ENCODE measurements at regions of chr6 and their contacts with region 1.

Region 1: DNA sequence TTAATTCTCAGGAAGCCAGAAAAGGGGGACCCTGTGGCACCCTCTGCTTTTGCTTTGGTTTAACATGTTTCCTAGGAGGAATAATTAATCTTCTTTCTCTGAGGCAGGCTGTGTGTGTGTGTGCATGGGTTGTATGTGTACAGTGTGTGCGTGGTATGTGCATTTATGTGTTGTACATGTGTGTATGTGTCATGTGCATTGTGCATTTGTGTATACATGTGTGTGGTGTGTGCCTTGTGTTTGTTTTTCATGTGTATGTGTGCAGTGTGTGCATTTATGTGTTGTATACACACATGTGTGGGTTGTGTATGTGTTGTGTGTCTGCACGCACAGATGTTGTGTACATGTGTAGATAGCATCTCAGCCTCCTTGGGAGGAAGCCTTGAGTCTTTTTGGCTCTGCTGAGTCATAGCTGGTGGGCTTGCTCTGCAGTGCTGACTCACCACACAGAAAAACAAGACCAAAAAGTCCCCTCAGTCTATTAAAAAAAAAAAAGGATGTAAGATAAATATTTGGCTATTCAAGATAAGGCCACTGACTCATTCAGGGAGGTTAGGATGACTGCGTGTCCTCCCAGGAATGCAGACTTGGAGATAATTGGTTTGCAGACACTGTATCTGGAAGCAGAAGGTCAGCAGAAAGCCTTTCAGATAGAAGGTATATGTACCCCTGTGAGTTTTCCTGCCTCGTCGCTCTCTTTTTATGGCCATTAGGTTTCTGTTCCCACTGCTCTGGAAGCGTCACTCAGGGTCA is 58.6 kb downstream of the SYNJ2 start:
- DNase-seq: peak; percentile 91
- H3K4me3 ChIP-seq: no peak overlapping the region
- H3K27ac ChIP-seq: no peak overlapping the region
- H3K4me1 ChIP-seq: peaks cover 48% of the 10 kb centered on the region
- H3K27me3 ChIP-seq: no peaks in the 10 kb centered on the region
- CTCF ChIP-seq: no peak

Region 2: DNA sequence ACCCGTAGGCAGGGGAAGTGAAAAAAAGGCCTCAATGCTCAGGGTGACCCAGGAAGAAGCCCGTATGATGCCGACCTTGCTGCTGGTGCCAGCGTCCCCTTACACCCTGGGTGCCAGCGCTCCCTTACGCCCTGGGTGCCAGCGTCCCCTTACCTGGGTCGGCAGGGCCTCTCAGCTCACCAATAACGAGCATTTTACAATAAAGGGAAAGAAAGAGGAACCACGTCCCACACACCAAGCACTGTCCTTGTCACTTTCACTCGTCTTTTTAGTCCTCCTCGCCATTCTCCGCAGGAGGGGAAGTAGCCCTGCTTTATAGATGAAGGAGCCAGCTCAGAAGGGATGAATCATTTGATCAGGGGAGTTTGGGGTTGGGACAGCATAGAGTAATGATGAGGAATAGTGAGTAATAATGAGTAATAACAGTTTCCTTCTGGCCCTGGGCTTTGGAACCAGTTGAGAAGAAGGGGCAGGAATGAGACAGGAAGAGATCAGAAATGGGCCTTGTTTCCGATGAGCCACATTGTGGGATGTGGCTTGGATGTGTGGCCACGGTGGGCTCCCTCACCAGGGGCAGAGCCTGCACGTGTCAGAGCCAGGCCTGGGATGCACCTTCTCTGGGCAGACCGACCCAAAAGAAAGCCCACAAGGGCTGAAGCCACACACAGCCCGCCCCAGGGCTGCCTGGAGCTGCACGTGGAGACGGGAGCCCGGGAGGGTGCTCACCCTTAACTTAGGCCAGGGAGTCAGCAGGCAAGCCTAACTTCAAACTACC is 17.2 kb after region 1 on chr6:
- CTCF ChIA-PET with region 1: no interaction called
- dilution Hi-C with region 1: no loop called
- in situ Hi-C with region 1: no loop called
- intact Hi-C with region 1: loop called (anchors 2 kb)
- DNase-seq: peak; percentile 96
- H3K4me3 ChIP-seq: no peak overlapping the region
- H3K27ac ChIP-seq: peak overlapping the region; percentile 62
- H3K4me1 ChIP-seq: peaks cover 33% of the 10 kb centered on the region
- H3K27me3 ChIP-seq: no peaks in the 10 kb centered on the region
- CTCF ChIP-seq: no peak